ENCODE measurements at regions of chr3 and their contacts with region 1.

Region 1: DNA sequence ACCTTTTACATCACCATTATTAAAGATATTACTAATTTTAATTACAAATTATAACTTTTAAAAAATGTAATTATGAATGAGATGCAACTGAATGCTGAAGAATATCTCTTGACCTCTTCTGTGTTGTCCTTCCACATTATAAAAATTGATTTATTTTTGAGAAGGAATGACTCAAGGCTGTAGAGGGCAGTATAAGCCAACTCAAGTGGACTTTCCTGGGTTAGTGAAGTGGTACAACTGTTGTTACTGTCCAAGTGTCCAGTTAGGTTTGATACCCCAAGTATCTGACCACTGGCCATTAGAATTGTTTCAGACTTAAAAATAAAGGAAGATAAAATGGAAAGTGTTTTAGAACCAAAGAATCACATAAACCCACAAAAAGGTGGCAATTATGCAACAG is 51.9 kb downstream of the BBX start:
- DNase-seq: peak; percentile 24
- H3K4me3 ChIP-seq: no peak overlapping the region
- H3K27ac ChIP-seq: no peak overlapping the region
- H3K4me1 ChIP-seq: no peaks in the 10 kb centered on the region
- H3K27me3 ChIP-seq: no peaks in the 10 kb centered on the region
- CTCF ChIP-seq: peak; percentile 32 to 55

Region 2: DNA sequence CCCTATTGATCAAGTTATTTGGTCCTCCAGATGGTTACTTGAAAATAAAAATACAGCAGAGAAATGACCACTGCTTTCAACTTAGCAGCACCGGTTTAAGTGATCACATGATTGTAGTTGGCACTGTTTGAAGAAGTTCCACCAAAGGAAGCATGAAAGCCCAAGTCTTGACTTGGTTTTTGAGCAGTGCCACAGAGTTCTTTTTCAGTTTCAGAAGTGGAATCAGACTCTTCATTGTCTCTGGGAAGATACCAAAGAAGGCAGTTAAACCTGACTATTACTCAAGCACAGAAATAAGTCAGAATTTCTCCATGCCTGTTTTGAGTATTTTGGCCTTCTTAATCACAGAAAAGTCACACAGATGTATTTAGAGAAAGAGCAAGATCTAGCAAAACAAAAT is 14.8 kb after region 1 on chr3:
- CTCF ChIA-PET with region 1: interaction called, 10 read pairs
- dilution Hi-C with region 1: no loop called
- in situ Hi-C with region 1: no loop called
- intact Hi-C with region 1: no loop called
- DNase-seq: no peak
- H3K4me3 ChIP-seq: no peak overlapping the region
- H3K27ac ChIP-seq: no peak overlapping the region
- H3K4me1 ChIP-seq: no peaks in the 10 kb centered on the region
- H3K27me3 ChIP-seq: no peaks in the 10 kb centered on the region
- CTCF ChIP-seq: no peak

Region 3: GRCh38 chr3:107660306-107660976 is 85.8 kb after region 1 on chr3:
- CTCF ChIA-PET with region 1: interaction called, 4 read pairs
- dilution Hi-C with region 1: no loop called
- in situ Hi-C with region 1: no loop called
- intact Hi-C with region 1: loop called (anchors 10 kb)
- DNase-seq: no peak
- H3K4me3 ChIP-seq: no peak overlapping the region
- H3K27ac ChIP-seq: no peak overlapping the region
- H3K4me1 ChIP-seq: no peaks in the 10 kb centered on the region
- H3K27me3 ChIP-seq: no peaks in the 10 kb centered on the region
- CTCF ChIP-seq: peak; percentile 66

Region 4: DNA sequence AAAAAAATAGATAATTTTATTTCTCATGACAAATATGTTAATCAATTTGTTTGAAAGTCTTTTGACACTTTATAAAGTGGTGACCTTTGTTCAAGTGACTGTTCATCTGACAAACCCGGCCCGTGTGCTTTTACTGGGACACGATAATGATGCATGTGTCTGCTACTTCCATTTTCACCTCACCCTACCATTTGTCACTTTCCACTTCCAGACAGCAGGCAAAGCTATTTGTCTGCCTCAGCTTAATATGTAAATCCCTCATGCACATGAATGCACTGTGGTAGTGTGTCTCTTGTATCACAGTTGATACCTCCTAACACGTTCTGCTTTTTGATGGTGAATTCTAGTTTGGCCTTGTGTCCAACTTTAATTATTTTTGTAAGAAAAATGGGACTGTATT is 152.5 kb after region 1 on chr3:
- CTCF ChIA-PET with region 1: no interaction called
- dilution Hi-C with region 1: no loop called
- in situ Hi-C with region 1: no loop called
- intact Hi-C with region 1: no loop called
- DNase-seq: no peak
- H3K4me3 ChIP-seq: no peak overlapping the region
- H3K27ac ChIP-seq: no peak overlapping the region
- H3K4me1 ChIP-seq: no peaks in the 10 kb centered on the region
- H3K27me3 ChIP-seq: no peaks in the 10 kb centered on the region
- CTCF ChIP-seq: no peak

Region 5: GRCh38 chr3:107740992-107741896 is 166.6 kb after region 1 on chr3:
- CTCF ChIA-PET with region 1: no interaction called
- dilution Hi-C with region 1: no loop called
- in situ Hi-C with region 1: no loop called
- intact Hi-C with region 1: loop called (anchors 5 kb)
- DNase-seq: peak; percentile 11
- H3K4me3 ChIP-seq: no peak overlapping the region
- H3K27ac ChIP-seq: no peak overlapping the region
- H3K4me1 ChIP-seq: no peaks in the 10 kb centered on the region
- H3K27me3 ChIP-seq: no peaks in the 10 kb centered on the region
- CTCF ChIP-seq: peak; percentile 43 to 47

Measured in mammary epithelial cell (primary cell).